Heart right ventricle (tissue), 16 donors: ENCODE measurements at regions of chr12 and their contacts with region 1.

Region 1: DNA sequence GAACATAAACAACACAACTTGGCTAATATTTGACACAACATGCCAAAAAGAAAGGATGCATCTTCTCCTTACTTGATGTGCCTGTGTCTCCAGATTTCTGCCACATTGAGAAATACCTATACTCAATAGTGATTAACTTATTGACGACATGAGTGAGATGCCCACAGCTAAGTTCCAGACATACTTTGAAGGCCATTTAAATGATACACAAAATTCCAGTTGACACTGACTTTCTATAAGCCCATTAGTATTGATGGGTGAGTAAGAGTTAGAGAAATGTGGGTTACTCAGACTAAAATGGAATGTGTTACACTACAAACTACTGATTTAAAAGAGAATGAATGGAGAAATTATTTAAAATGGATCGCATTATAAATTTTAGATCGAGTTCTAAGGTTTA is 838.2 kb upstream of the MGAT4C start:
- DNase-seq: no peak
- ATAC-seq: no peak
- H3K4me3 ChIP-seq: no peak overlapping the region
- H3K27ac ChIP-seq: no peak overlapping the region
- H3K4me1 ChIP-seq: no peaks in the 10 kb centered on the region
- H3K27me3 ChIP-seq: no peaks in the 10 kb centered on the region
- CTCF ChIP-seq: no peak

Region 2: DNA sequence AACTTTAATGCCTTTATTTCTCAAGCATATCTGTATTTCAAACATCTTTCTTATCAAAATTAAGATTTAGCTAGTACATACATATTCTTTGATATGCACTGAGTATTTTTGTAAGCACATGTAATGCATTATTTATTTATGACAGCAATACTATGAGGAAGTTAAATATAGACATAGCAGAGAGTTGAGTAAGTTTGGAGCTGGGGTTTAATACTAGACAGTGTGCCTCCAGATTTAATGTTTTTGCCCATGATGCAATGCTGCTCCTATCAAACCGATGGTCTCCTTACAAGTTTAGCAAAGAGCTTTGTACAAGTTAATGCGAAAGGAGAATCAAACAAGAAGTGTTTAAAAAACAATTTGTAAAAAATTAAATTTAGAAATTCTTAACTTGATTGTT is 11.6 kb before region 1 on chr12:
- intact Hi-C with region 1: loop called in 1 of 10 experiments (anchors 1 kb)
- DNase-seq: no peak
- ATAC-seq: no peak
- H3K4me3 ChIP-seq: no peak overlapping the region
- H3K27ac ChIP-seq: no peak overlapping the region
- H3K4me1 ChIP-seq: no peaks in the 10 kb centered on the region
- H3K27me3 ChIP-seq: no peaks in the 10 kb centered on the region
- CTCF ChIP-seq: no peak